ENCODE measurements at regions of chr19 and their contacts with region 1.

Region 1: DNA sequence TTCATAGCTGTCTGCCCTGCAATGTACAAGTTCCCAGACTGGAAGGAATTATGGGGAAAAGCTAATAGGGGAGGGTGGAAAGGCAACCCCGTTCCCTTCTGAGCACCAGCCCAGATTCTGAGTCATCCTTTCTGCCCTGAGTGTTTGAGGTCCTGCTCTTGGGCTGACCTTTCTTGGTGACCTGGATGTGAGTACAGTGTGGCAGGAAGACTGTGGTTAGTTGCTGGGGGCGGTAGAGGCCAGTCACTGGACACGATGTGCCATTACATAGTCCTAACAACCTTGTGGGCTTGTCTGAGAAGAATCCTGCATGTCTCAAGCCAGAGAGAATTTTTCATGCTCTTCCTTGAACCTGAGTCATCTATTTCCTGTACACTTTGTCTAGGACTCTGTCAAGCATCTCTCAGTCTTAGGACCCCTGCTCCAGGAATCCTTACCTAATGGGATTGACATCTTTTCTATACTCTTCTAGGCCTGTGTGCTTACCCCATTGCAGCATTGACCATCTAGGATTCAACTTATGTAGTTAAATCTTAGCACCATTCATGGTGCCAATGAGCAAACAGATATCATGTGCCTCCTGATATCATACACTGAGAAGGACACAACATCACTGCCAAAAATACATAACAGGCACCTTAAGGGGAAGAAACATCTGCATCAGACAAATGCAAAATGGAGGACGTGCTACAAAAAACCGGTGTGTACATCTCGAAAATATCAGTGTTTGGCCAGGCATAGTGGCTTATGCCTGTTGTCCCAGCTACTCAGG is 8.1 kb upstream of the ANGPTL4 start:
- DNase-seq: peak in 3 of 4 donors; percentile 33 to 74 (median 53)
- ATAC-seq: peak; percentile 62
- H3K4me3 ChIP-seq: no peak overlapping the region
- H3K27ac ChIP-seq: peak overlapping the region in 3 of 4 donors; percentile 21 to 52 (median 39)
- H3K4me1 ChIP-seq: peaks cover 53% of the 10 kb centered on the region
- H3K27me3 ChIP-seq: no peaks in the 10 kb centered on the region
- CTCF ChIP-seq: no peak
- POLR2A ChIP-seq: no peak

Region 2: GRCh38 chr19:8069096-8069973 is 286.5 kb before region 1 on chr19:
- intact Hi-C with region 1: no loop called
- DNase-seq: no peak
- ATAC-seq: no peak
- H3K4me3 ChIP-seq: no peak overlapping the region
- H3K27ac ChIP-seq: no peak overlapping the region
- H3K4me1 ChIP-seq: no peaks in the 10 kb centered on the region
- H3K27me3 ChIP-seq: no peaks in the 10 kb centered on the region
- CTCF ChIP-seq: peak in 3 of 7 experiments; percentile 16 to 33 (median 27)
- POLR2A ChIP-seq: no peak

Region 3: DNA sequence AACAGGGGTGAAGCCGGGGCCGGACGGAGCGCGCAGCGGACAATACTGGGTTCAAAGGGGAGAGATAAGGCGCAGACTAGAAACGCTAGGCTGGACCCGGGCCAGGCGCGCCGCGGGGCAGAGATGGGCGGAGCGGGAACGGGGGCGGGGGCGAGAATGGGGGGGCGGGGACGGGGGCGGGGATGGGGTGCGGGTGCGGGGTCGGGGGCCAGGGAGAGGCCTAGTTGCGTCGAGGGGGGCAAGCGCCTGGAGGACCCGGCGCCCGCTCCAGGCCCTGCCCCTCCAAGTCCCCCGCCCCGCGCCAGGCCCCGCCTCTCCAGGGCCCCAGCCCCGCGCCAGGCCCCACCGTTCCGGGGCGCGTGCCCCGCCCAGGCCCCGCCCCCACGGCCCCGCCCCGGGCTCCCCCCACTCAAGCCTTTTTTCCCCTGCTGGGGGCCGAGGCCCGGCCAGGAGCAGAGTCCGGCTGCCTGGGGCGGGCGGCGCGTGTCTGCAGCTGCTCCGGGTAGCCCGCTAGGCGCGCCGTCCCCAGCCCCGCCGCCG is 146.8 kb before region 1 on chr19 and contains the start of gene CERS4:
- intact Hi-C with region 1: no loop called
- DNase-seq: peak; percentile 82 to 89 (median 86)
- ATAC-seq: peak; percentile 73
- H3K4me3 ChIP-seq: peak within 1 kb of the TSS; percentile 69 to 91
- H3K27ac ChIP-seq: peak within 1 kb of the TSS; percentile 85 to 88 (median 86)
- H3K4me1 ChIP-seq: peaks cover 80% of the 10 kb centered on the region
- H3K27me3 ChIP-seq: no peaks in the 10 kb centered on the region
- CTCF ChIP-seq: no peak
- POLR2A ChIP-seq: no peak
- total RNA-seq, gene CERS4: 53.1 to 87.4 TPM

Region 4: DNA sequence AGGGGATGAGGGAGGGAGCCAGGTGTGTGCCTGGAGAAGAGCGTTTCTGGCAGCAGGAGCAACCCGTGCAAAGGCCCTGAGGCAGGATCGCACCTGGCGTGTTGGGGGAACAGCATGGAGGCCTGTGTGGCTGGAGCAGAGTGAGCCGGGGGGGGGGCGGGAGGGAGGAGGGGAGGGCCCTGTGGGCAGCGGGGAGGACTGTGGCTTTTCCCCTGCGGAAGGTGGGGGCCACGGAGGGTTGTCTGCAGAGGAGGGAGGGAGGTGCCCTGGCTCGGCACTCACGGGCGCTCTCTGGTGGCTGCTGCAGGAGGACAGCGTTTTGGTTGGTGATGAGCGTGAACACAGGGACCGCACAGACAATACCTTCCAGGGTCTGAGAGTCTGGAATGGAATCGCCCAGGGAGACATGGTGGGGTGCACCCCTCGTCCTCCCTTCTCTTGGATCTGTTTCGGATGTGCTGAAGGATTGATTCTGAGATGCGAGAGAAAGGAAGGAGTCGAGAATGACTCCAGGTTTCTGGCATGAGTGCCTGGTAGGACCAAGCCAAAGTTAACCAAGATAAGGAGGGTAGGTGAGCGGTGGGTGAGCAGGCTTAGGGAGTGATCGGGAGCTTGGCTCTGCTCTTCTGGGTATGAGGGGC is 40.9 kb after region 1 on chr19:
- intact Hi-C with region 1: loop called (anchors 5 kb)
- DNase-seq: peak; percentile 64 to 76 (median 70)
- ATAC-seq: no peak
- H3K4me3 ChIP-seq: no peak overlapping the region
- H3K27ac ChIP-seq: peak overlapping the region in 3 of 4 donors; percentile 44 to 62 (median 58)
- H3K4me1 ChIP-seq: peaks cover 70% of the 10 kb centered on the region
- H3K27me3 ChIP-seq: no peaks in the 10 kb centered on the region
- CTCF ChIP-seq: peak in 6 of 7 experiments; percentile 26 to 71 (median 50)
- POLR2A ChIP-seq: no peak

Region 5: GRCh38 chr19:8505680-8506401 is 150.0 kb after region 1 on chr19:
- intact Hi-C with region 1: loop called (anchors 5 kb)
- DNase-seq: peak; percentile 84 to 92 (median 86)
- ATAC-seq: peak; percentile 88
- H3K4me3 ChIP-seq: peak overlapping the region in 1 of 2 donors; percentile 30
- H3K27ac ChIP-seq: peak overlapping the region; percentile 12 to 74 (median 52)
- H3K4me1 ChIP-seq: peaks cover 13% of the 10 kb centered on the region
- H3K27me3 ChIP-seq: no peaks in the 10 kb centered on the region
- CTCF ChIP-seq: peak; percentile 77 to 90 (median 83)
- POLR2A ChIP-seq: peak in 2 of 3 donors; percentile 22 to 36

Region 6: GRCh38 chr19:8578642-8579265 is 222.9 kb after region 1 on chr19:
- intact Hi-C with region 1: loop called (anchors 10 kb)
- DNase-seq: peak; percentile 74 to 81 (median 77)
- ATAC-seq: peak; percentile 48
- H3K4me3 ChIP-seq: no peak overlapping the region
- H3K27ac ChIP-seq: no peak overlapping the region
- H3K4me1 ChIP-seq: peaks cover 6% of the 10 kb centered on the region
- H3K27me3 ChIP-seq: peaks cover 0 to 8% of the 10 kb centered on the region in 2 donors
- CTCF ChIP-seq: peak; percentile 69 to 90 (median 78)
- POLR2A ChIP-seq: no peak